Activated naive CD4-positive, alpha-beta T cell treated with anti-CD3 and anti-CD28 coated beads for 36 hours (primary cell): ENCODE measurements at regions of chr2 and their contacts with region 1.

Region 1: GRCh38 chr2:47272031-47272864 is 117.1 kb upstream of the STPG4 start:
- DNase-seq: peak; percentile 48
- H3K4me3 Mint-ChIP-seq: peak overlapping the region; percentile 50
- H3K27ac Mint-ChIP-seq: no peak overlapping the region
- H3K4me1 Mint-ChIP-seq: peaks cover 2% of the 10 kb centered on the region
- H3K27me3 Mint-ChIP-seq: no peaks in the 10 kb centered on the region

Region 2: DNA sequence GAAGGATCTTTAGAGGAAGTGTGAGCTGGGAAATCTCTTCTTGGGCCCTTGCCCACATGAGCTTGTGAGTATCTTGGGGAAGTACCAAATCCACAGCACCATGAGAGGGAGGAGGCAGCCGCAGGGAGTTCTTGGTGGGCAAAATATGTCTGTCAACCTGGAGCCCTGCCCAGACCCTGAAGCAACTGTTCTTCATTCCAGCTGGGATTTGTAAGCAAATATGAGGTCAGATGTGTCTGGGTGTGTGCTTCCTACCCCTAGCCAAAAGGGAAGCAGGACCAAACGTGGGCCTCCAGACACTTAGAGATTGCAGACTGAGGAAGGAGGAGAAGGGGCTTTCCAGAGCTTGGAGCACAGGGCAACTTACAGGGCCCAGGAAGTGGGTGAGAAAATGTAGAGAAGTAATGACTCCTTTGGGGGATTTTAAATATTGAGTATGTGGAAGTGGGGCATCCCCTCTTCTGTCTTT is 751.0 kb before region 1 on chr2:
- CTCF ChIA-PET with region 1: no interaction called
- intact Hi-C with region 1: no loop called
- DNase-seq: peak; percentile 48
- H3K4me3 Mint-ChIP-seq: no peak overlapping the region
- H3K27ac Mint-ChIP-seq: no peak overlapping the region
- H3K4me1 Mint-ChIP-seq: peaks cover 8% of the 10 kb centered on the region
- H3K27me3 Mint-ChIP-seq: no peaks in the 10 kb centered on the region

Region 3: GRCh38 chr2:46893269-46893945 is 378.8 kb before region 1 on chr2:
- CTCF ChIA-PET with region 1: no interaction called
- intact Hi-C with region 1: no loop called
- DNase-seq: no peak
- H3K4me3 Mint-ChIP-seq: no peak overlapping the region
- H3K27ac Mint-ChIP-seq: no peak overlapping the region
- H3K4me1 Mint-ChIP-seq: no peaks in the 10 kb centered on the region
- H3K27me3 Mint-ChIP-seq: no peaks in the 10 kb centered on the region

Region 4: GRCh38 chr2:47088668-47089462 is 183.4 kb before region 1 on chr2:
- CTCF ChIA-PET with region 1: interaction called, 4 read pairs
- intact Hi-C with region 1: loop called (anchors 10 kb)
- DNase-seq: no peak
- H3K4me3 Mint-ChIP-seq: no peak overlapping the region
- H3K27ac Mint-ChIP-seq: no peak overlapping the region
- H3K4me1 Mint-ChIP-seq: peaks cover 5% of the 10 kb centered on the region
- H3K27me3 Mint-ChIP-seq: peaks cover 3% of the 10 kb centered on the region

Region 5: GRCh38 chr2:47282621-47283272 is 10.5 kb after region 1 on chr2:
- CTCF ChIA-PET with region 1: interaction called, 19 read pairs
- intact Hi-C with region 1: no loop called
- DNase-seq: no peak
- H3K4me3 Mint-ChIP-seq: no peak overlapping the region
- H3K27ac Mint-ChIP-seq: no peak overlapping the region
- H3K4me1 Mint-ChIP-seq: no peaks in the 10 kb centered on the region
- H3K27me3 Mint-ChIP-seq: peaks cover 2% of the 10 kb centered on the region

Region 6: DNA sequence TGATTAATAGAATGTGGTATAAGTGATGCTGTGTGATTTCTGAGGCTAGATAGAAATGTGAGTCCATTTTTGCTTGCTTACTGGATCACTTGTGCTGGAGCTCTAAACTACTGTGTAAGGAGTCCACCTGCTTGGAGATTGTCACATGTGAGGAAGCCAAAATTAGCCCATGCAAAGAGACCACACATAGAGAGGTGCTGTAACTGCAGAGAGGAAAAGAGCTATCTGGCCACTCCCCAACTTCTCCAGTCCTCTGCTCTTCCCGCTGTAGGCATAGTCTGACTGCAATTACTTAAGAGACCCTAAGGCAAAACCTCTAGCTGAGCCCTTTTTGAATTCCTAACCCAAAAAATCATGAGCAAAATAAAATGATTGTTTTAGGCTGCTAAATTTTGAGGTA is 754.6 kb after region 1 on chr2:
- CTCF ChIA-PET with region 1: no interaction called
- intact Hi-C with region 1: no loop called
- DNase-seq: no peak
- H3K4me3 Mint-ChIP-seq: no peak overlapping the region
- H3K27ac Mint-ChIP-seq: no peak overlapping the region
- H3K4me1 Mint-ChIP-seq: no peaks in the 10 kb centered on the region
- H3K27me3 Mint-ChIP-seq: no peaks in the 10 kb centered on the region